ENCODE measurements at regions of chrX and their contacts with region 1.

Region 1: DNA sequence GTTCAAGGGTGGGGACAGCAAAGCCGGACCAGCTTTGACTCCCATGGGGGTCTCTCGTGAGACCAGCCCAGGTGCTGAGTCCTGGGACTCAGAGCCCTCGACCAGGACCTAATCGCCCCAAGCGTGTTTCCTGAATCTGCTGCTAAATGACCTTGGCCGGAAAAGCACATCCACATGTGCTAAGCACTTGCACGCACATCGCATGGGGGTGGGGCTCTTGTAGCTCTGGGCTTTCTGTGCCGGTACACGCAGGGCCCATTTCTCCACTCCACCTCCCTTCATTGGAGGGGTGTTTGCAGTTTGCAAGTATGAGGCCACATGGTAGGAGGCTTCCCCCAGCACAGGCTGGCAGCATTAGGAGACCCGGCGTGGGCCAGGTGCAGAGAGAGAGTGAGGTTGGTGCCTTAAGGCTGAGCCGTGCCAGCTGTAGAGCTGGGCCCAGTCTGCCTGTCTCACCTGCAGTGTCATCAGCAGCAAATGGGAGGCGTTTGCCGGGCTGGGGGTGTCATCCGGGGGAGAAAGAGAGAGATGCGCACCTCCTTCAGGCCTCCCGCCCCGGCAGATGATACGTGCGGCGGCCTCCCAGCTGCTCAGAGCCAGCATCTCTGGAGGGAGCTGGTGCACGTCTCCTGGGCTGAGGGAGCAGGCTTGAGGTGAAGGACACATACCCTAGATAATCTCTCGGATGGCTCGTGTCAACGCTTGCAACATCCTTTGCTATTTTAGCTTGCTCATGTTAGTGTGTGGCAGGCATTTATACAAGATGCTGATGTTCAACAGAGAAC is 45.2 kb upstream of the CLCN4 start:
- DNase-seq: peak; percentile 38 to 86 (median 62)
- ATAC-seq: peak; percentile 69
- H3K4me3 ChIP-seq: peak overlapping the region; percentile 45
- H3K4me3 Mint-ChIP-seq: peak overlapping the region; percentile 25
- H3K27ac ChIP-seq: peak overlapping the region; percentile 77 to 79
- H3K27ac Mint-ChIP-seq: peak overlapping the region; percentile 96
- H3K4me1 ChIP-seq: peaks cover 67% of the 10 kb centered on the region
- H3K4me1 Mint-ChIP-seq: peaks cover 46% of the 10 kb centered on the region
- H3K27me3 ChIP-seq: no peaks in the 10 kb centered on the region
- H3K27me3 Mint-ChIP-seq: no peaks in the 10 kb centered on the region
- CTCF ChIP-seq: no peak

Region 2: GRCh38 chrX:10083809-10084208 is 27.7 kb before region 1 on chrX:
- CTCF ChIA-PET with region 1: no interaction called
- POLR2A ChIA-PET with region 1: interaction called, 11 read pairs
- intact Hi-C with region 1: loop called in 1 of 2 experiments (anchors 5 kb)
- DNase-seq: no peak
- ATAC-seq: no peak
- H3K4me3 ChIP-seq: no peak overlapping the region
- H3K4me3 Mint-ChIP-seq: no peak overlapping the region
- H3K27ac ChIP-seq: peak overlapping the region; percentile 29 to 70
- H3K27ac Mint-ChIP-seq: peak overlapping the region; percentile 86
- H3K4me1 ChIP-seq: peaks cover 42% of the 10 kb centered on the region
- H3K4me1 Mint-ChIP-seq: peaks cover 36% of the 10 kb centered on the region
- H3K27me3 ChIP-seq: no peaks in the 10 kb centered on the region
- H3K27me3 Mint-ChIP-seq: no peaks in the 10 kb centered on the region
- CTCF ChIP-seq: no peak

Region 3: DNA sequence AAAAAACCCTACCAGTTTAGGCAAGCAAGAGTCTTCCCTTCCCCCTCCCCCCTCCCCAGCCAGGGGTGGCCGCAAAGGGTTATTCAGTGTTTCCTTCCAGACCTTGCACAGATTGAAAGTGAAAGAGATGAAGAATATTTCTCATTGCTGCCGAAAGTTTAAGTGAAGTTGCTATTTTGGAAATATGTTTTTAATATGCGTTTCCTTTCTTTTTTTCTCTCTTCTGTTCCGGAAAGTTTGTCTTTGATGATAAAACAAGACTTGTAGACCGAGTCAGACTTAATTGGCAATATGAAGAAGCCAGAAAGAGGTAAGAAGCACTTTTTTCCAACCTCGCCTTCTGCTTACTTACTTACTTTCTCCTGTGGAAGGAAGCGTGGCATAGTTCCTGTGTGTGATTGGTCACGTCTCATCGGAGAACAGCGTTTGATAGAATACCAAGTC is 13.3 kb before region 1 on chrX:
- CTCF ChIA-PET with region 1: interaction called, 3 read pairs
- POLR2A ChIA-PET with region 1: interaction called, 12 read pairs
- intact Hi-C with region 1: no loop called
- DNase-seq: peak in 13 of 14 experiments; percentile 28 to 82 (median 55)
- ATAC-seq: peak; percentile 88
- H3K4me3 ChIP-seq: peak overlapping the region; percentile 54
- H3K4me3 Mint-ChIP-seq: peak overlapping the region; percentile 94
- H3K27ac ChIP-seq: peak overlapping the region; percentile 29 to 55
- H3K27ac Mint-ChIP-seq: peak overlapping the region; percentile 88
- H3K4me1 ChIP-seq: peaks cover 43% of the 10 kb centered on the region
- H3K4me1 Mint-ChIP-seq: peaks cover 36% of the 10 kb centered on the region
- H3K27me3 ChIP-seq: no peaks in the 10 kb centered on the region
- H3K27me3 Mint-ChIP-seq: no peaks in the 10 kb centered on the region
- CTCF ChIP-seq: no peak

Measured in CD4-positive, alpha-beta T cell (primary cell).